ENCODE measurements at regions of chr20 and their contacts with region 1.

Region 1: GRCh38 chr20:54207743-54208547 is at the start of gene PFDN4:
- DNase-seq: peak in 1 of 2 donors; percentile 87
- H3K4me3 ChIP-seq: peak within 1 kb of the TSS; percentile 88 to 94
- H3K27ac ChIP-seq: peak within 1 kb of the TSS; percentile 96 to 98
- H3K4me1 ChIP-seq: peaks cover 0 to 16% of the 10 kb centered on the region in 2 donors
- H3K27me3 ChIP-seq: no peaks in the 10 kb centered on the region
- CTCF ChIP-seq: peak; percentile 58 to 83 (median 82)
- total RNA-seq, gene PFDN4: 68.9 TPM

Region 2: DNA sequence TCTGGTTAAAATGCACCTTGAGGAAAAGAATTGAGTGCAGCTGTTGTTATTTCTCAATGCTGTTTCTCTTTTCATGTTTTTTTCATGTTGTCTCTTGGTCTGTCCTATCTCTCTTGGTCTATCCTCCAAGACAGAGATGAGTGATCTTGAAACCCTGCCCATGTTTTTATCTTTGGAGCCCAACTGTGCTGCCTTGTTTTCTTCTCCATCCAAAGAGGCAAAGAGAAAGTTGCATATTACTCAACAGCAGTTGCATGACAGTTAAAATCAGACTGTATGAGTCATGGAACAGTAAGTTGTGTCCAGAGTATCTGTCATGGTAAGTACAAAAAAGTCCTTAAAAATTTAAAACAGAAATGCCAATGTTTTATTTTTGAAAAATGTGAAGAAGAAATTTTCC is 163.8 kb before region 1 on chr20:
- intact Hi-C with region 1: loop called (anchors 5 kb)
- DNase-seq: no peak
- H3K4me3 ChIP-seq: no peak overlapping the region
- H3K27ac ChIP-seq: no peak overlapping the region
- H3K4me1 ChIP-seq: no peaks in the 10 kb centered on the region
- H3K27me3 ChIP-seq: no peaks in the 10 kb centered on the region
- CTCF ChIP-seq: no peak

Region 3: DNA sequence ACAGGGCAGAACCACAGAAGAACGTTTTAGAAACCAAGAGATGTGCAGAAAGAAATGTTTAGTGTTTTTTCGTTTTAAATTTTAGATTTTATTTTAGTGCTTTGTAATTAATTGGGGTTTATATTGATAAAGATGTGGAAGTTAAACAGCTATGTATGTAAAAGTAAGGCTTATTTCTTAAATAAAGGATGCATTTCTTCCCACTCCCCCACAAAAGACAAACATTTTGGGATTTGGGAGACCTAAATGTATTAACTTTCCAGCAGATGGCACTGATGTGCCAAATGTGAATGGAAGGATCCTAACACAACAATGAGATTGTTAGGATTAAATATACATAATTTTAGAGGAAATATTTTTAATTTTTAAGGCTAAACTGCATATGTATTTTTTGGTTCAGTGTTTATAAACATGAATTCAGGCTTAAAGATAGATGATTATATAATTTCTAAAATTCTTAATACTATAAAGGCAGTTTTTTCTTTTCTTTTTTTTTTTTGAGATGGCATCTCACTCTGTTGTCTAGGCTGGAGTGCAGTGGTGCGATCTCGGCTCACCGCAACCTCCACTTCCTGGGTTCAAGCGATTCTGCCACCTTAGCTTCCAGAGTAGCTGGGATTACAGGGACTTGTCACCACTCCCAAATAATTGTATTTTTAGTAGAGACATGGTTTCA is 11.9 kb after region 1 on chr20:
- intact Hi-C with region 1: no loop called
- DNase-seq: no peak
- H3K4me3 ChIP-seq: no peak overlapping the region
- H3K27ac ChIP-seq: no peak overlapping the region
- H3K4me1 ChIP-seq: peaks cover 0 to 21% of the 10 kb centered on the region in 2 donors
- H3K27me3 ChIP-seq: no peaks in the 10 kb centered on the region
- CTCF ChIP-seq: peak; percentile 18 to 63 (median 53)

Region 4: DNA sequence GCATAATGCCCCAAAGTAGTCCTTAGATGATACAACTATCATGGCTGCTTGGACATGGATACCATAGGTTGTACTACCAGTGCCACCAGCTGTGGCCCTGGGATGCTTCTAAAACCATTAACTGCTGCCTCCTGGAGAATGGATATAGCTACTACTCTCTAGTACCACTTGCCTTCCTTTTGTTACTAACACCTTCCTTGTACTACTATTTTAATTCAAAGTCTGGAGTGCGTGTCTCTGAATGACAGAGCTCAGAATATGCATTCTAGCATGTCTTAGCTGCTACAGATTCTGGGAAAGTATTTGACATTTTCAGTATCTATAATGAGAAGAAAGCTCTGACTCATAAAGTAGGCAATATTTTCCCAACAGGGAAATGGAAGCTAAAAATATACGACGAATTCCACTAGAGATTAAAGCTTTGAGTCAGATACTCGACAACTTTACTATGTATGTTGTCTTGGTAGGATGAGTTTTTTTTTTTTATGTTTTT is 112.2 kb after region 1 on chr20:
- intact Hi-C with region 1: no loop called
- DNase-seq: no peak
- H3K4me3 ChIP-seq: no peak overlapping the region
- H3K27ac ChIP-seq: no peak overlapping the region
- H3K4me1 ChIP-seq: no peaks in the 10 kb centered on the region
- H3K27me3 ChIP-seq: no peaks in the 10 kb centered on the region
- CTCF ChIP-seq: no peak

Measured in ascending aorta (tissue), 2 donors.